ENCODE measurements at regions of chr18 and their contacts with region 1.

Region 1: GRCh38 chr18:36129300-36130038 is at the starts of genes ELP2 and SLC39A6:
- DNase-seq: peak; percentile 95
- H3K4me3 Mint-ChIP-seq: peak within 1 kb of the TSS; percentile 94
- H3K27ac Mint-ChIP-seq: peak within 1 kb of the TSS; percentile 95
- H3K4me1 Mint-ChIP-seq: peaks cover 60% of the 10 kb centered on the region
- H3K27me3 Mint-ChIP-seq: no peaks in the 10 kb centered on the region
- total RNA-seq, gene ELP2: 83.7 to 84.4 TPM
- total RNA-seq, gene SLC39A6: 23.7 to 24.3 TPM

Region 2: GRCh38 chr18:36025025-36025424 is 104.4 kb before region 1 on chr18:
- CTCF ChIA-PET with region 1: no interaction called
- POLR2A ChIA-PET with region 1: no interaction called
- intact Hi-C with region 1: no loop called
- DNase-seq: no peak
- H3K4me3 Mint-ChIP-seq: no peak overlapping the region
- H3K27ac Mint-ChIP-seq: no peak overlapping the region
- H3K4me1 Mint-ChIP-seq: peaks cover 9% of the 10 kb centered on the region
- H3K27me3 Mint-ChIP-seq: no peaks in the 10 kb centered on the region

Region 3: DNA sequence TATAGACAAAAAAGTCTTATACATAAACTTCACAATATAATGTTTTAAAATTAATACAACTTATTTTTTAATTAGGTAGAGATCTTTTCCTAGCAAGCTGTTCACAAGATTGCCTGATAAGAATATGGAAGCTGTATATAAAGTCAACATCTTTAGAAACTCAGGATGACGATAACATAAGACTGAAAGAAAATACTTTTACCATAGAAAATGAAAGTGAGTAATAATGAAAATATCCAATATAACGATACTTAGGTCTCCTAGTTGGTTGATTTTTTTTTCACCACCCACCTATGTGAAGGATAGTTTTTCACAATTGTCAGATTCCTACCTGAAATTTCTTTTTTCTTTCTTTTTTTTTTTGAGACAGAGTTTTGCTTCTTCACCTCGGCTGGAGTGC is 13.3 kb after region 1 on chr18:
- CTCF ChIA-PET with region 1: no interaction called
- POLR2A ChIA-PET with region 1: interaction called, 3 read pairs
- intact Hi-C with region 1: loop called (anchors 1 kb)
- DNase-seq: no peak
- H3K4me3 Mint-ChIP-seq: no peak overlapping the region
- H3K27ac Mint-ChIP-seq: no peak overlapping the region
- H3K4me1 Mint-ChIP-seq: peaks cover 5% of the 10 kb centered on the region
- H3K27me3 Mint-ChIP-seq: no peaks in the 10 kb centered on the region

Region 4: GRCh38 chr18:36203360-36203895 is 74.0 kb after region 1 on chr18:
- CTCF ChIA-PET with region 1: no interaction called
- POLR2A ChIA-PET with region 1: no interaction called
- intact Hi-C with region 1: no loop called
- DNase-seq: no peak
- H3K4me3 Mint-ChIP-seq: no peak overlapping the region
- H3K27ac Mint-ChIP-seq: no peak overlapping the region
- H3K4me1 Mint-ChIP-seq: no peaks in the 10 kb centered on the region
- H3K27me3 Mint-ChIP-seq: peaks cover 2% of the 10 kb centered on the region

Region 5: DNA sequence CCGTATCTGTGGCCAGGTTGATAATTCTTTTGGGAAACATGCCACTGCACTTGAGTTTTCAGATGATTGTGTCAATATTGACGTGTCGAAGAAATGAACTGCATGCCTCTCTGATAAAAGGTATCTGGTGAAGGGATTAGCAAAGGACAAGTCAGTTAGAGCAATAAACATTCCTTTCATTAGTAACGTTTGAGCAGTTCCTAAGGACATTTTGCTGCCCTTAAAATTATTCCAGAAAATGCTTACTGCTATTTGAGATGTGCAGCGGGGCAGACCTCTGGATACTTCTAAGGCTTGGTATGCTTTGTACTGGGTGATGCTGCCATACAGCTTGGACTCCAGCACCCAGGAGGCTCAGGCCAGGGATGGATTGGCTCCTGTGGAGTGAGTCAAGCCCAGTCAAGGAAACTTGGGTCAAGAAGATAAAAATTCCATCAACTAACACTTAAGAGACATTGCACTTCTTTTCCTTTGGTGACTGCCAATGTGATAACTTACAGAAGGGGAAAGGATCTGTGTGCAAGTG is 334.7 kb after region 1 on chr18:
- CTCF ChIA-PET with region 1: no interaction called
- POLR2A ChIA-PET with region 1: no interaction called
- intact Hi-C with region 1: no loop called
- DNase-seq: no peak
- H3K4me3 Mint-ChIP-seq: no peak overlapping the region
- H3K27ac Mint-ChIP-seq: no peak overlapping the region
- H3K4me1 Mint-ChIP-seq: no peaks in the 10 kb centered on the region
- H3K27me3 Mint-ChIP-seq: peaks cover 2% of the 10 kb centered on the region

Region 6: GRCh38 chr18:36828630-36829361 is 699.3 kb after region 1 on chr18 and contains the starts of genes KIAA1328 and TPGS2:
- CTCF ChIA-PET with region 1: no interaction called
- POLR2A ChIA-PET with region 1: interaction called, 3 read pairs
- intact Hi-C with region 1: loop called (anchors 1 kb)
- DNase-seq: peak; percentile 93
- H3K4me3 Mint-ChIP-seq: peak within 1 kb of the TSS; percentile 98
- H3K27ac Mint-ChIP-seq: peak within 1 kb of the TSS; percentile 91
- H3K4me1 Mint-ChIP-seq: peaks cover 38% of the 10 kb centered on the region
- H3K27me3 Mint-ChIP-seq: no peaks in the 10 kb centered on the region
- total RNA-seq, gene KIAA1328: 7.3 to 7.8 TPM
- total RNA-seq, gene TPGS2: 77.9 to 83.0 TPM